Activated naive CD4-positive, alpha-beta T cell treated with anti-CD3 and anti-CD28 coated beads for 36 hours (primary cell): ENCODE measurements at regions of chr5 and their contacts with region 1.

Region 1: GRCh38 chr5:157431544-157432200 is 28.3 kb upstream of the NIPAL4 start:
- DNase-seq: peak; percentile 41
- H3K4me3 Mint-ChIP-seq: no peak overlapping the region
- H3K27ac Mint-ChIP-seq: no peak overlapping the region
- H3K4me1 Mint-ChIP-seq: peaks cover 3% of the 10 kb centered on the region
- H3K27me3 Mint-ChIP-seq: peaks cover 9% of the 10 kb centered on the region

Region 2: GRCh38 chr5:157400741-157401495 is 30.8 kb before region 1 on chr5:
- CTCF ChIA-PET with region 1: interaction called, 11 read pairs
- intact Hi-C with region 1: no loop called
- DNase-seq: no peak
- H3K4me3 Mint-ChIP-seq: no peak overlapping the region
- H3K27ac Mint-ChIP-seq: no peak overlapping the region
- H3K4me1 Mint-ChIP-seq: peaks cover 10% of the 10 kb centered on the region
- H3K27me3 Mint-ChIP-seq: no peaks in the 10 kb centered on the region

Region 3: GRCh38 chr5:157471709-157472108 is 40.0 kb after region 1 on chr5:
- CTCF ChIA-PET with region 1: interaction called, 76 read pairs
- intact Hi-C with region 1: loop called (anchors 1 kb)
- DNase-seq: peak; percentile 49
- H3K4me3 Mint-ChIP-seq: no peak overlapping the region
- H3K27ac Mint-ChIP-seq: no peak overlapping the region
- H3K4me1 Mint-ChIP-seq: no peaks in the 10 kb centered on the region
- H3K27me3 Mint-ChIP-seq: no peaks in the 10 kb centered on the region

Region 4: DNA sequence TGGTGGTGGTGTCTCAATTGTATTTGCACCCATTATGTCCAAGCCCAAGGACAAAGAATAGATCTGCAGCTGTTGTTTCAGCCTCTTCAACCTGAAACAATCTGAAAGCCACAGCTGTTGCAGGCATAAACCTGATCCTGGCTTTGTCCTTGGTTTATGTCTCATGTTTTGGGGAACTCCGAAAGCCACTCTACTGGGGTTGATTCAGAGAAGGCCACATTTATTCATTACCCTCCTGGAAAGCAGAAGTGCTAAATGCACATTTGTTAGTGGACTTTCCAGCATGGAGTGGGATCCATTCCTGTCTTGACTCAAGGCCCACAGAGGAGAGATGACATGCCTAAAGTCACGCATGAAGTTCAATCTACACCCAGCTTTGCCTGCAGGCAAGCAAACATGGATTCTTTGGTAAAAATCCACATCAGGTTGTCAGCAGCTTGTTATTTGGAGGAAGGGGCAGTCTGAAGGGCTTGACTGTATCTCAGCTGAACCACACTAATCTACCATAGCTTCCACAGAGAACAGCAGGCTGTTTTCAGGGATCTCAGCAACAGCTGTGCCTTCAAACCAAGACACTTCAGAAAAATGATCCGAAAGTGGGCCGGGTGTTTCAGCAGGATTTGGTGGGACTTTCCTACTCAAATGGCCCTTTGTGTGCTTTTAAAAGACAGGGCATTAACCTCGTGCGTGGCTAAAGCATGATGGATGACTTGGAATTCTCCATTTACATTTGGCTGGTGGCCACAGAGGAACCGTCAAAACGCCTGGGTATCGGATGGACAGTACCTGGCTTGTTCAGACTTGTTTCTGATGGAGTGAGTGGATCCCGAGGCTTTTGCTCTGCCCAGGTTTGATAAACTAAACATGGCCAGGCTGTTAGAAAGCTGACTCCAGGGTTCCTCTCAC is 180.2 kb after region 1 on chr5:
- CTCF ChIA-PET with region 1: no interaction called
- intact Hi-C with region 1: no loop called
- DNase-seq: peak; percentile 41
- H3K4me3 Mint-ChIP-seq: no peak overlapping the region
- H3K27ac Mint-ChIP-seq: no peak overlapping the region
- H3K4me1 Mint-ChIP-seq: peaks cover 52% of the 10 kb centered on the region
- H3K27me3 Mint-ChIP-seq: no peaks in the 10 kb centered on the region

Region 5: GRCh38 chr5:157651623-157652549 is 220.2 kb after region 1 on chr5 and contains the start of gene SOX30:
- CTCF ChIA-PET with region 1: no interaction called
- intact Hi-C with region 1: loop called (anchors 5 kb)
- DNase-seq: peak; percentile 87
- H3K4me3 Mint-ChIP-seq: peak within 1 kb of the TSS; percentile 71
- H3K27ac Mint-ChIP-seq: peak within 1 kb of the TSS; percentile 78
- H3K4me1 Mint-ChIP-seq: peaks cover 12% of the 10 kb centered on the region
- H3K27me3 Mint-ChIP-seq: peaks cover 2% of the 10 kb centered on the region
- total RNA-seq, gene SOX30: 0.36 to 0.57 TPM

Region 6: DNA sequence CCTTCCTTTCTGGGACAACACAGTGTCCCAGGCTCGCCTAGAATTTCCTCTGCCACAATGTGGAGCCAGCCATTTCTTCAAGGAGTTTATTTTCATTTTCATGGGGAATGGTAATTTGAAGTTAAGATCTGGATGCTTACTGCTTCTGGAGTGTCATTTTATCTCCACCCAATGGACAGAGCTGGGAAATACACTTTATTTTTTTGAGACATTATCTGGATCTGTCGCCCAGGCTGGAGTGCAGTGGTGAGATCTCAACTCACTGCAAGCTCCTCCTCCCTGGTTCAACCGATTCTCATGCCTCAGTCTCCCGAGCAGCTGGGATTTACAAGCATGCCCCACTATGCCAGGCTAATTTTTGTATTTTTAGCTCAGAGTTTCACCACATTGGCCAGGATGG is 286.8 kb after region 1 on chr5:
- CTCF ChIA-PET with region 1: interaction called, 26 read pairs
- intact Hi-C with region 1: loop called (anchors 1 kb)
- DNase-seq: no peak
- H3K4me3 Mint-ChIP-seq: no peak overlapping the region
- H3K27ac Mint-ChIP-seq: no peak overlapping the region
- H3K4me1 Mint-ChIP-seq: peaks cover 25% of the 10 kb centered on the region
- H3K27me3 Mint-ChIP-seq: no peaks in the 10 kb centered on the region